Posterior vena cava (tissue), 2 donors: ENCODE measurements at regions of chr5 and their contacts with region 1.

Region 1: GRCh38 chr5:165497707-165498106 is 1992.3 kb downstream of the MAT2B start:
- DNase-seq: no peak

Region 2: DNA sequence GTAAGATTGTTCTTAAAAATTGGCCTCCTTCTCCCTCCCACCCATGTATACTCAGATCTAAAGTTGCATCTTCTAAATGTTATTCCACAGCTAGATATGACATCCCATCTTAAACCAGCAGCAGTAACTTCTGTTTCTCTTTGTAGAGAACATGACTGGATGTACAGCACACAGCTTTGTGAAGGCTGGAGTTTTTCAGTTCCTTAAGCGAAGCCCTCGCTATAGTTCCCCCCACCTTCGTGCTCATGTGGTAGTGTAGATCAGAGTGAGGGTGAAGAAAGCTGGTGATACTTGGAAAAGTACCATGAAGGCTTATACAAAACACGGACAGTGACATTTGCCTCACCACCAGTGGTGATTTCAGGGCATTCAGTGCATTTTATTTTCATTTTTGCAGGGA is 1854.8 kb before region 1 on chr5:
- intact Hi-C with region 1: loop called in 1 of 2 experiments (anchors 5 kb)
- DNase-seq: no peak

Region 3: GRCh38 chr5:164672931-164673694 is 824.6 kb before region 1 on chr5:
- intact Hi-C with region 1: no loop called
- DNase-seq: no peak